H1 (cell line): ENCODE measurements at regions of chr1 and their contacts with region 1.

Region 1: GRCh38 chr1:67430352-67431155 is at the start of gene SERBP1:
- DNase-seq: peak; percentile 92 to 95
- H3K4me3 ChIP-seq: peak within 1 kb of the TSS; percentile 95 to 100 (median 98)
- H3K27ac ChIP-seq: peak within 1 kb of the TSS; percentile 94
- H3K4me1 ChIP-seq: peaks cover 0 to 12% (median 2%) of the 10 kb centered on the region in 4 experiments; a peak in 3 of 7 replicates
- H3K27me3 ChIP-seq: no peaks in the 10 kb centered on the region
- CTCF ChIP-seq: no peak
- EP300 ChIP-seq: no peak
- POLR2A ChIP-seq: peak; percentile 58 to 74
- RAD21 ChIP-seq: no peak; a peak in 1 of 4 replicates
- total RNA-seq, gene SERBP1: 536 and 539 TPM in 2 replicates

Region 2: GRCh38 chr1:67404212-67404620 is 26.3 kb before region 1 on chr1:
- CTCF ChIA-PET with region 1: interaction called, 7 read pairs
- POLR2A ChIA-PET with region 1: interaction called, 96 read pairs
- DNase-seq: no peak
- H3K4me3 ChIP-seq: no peak overlapping the region
- H3K27ac ChIP-seq: no peak overlapping the region
- H3K4me1 ChIP-seq: peaks cover 1 to 12% (median 7%) of the 10 kb centered on the region in 4 experiments; a peak in 4 of 7 replicates
- H3K27me3 ChIP-seq: no peaks in the 10 kb centered on the region
- CTCF ChIP-seq: no peak
- EP300 ChIP-seq: no peak
- POLR2A ChIP-seq: peak in 1 of 2 experiments; percentile 42; a peak in 1 of 3 replicates
- RAD21 ChIP-seq: no peak

Region 3: GRCh38 chr1:67441183-67441582 is 10.6 kb after region 1 on chr1:
- CTCF ChIA-PET with region 1: interaction called, 9 read pairs
- POLR2A ChIA-PET with region 1: interaction called, 37 read pairs
- DNase-seq: no peak
- H3K4me3 ChIP-seq: no peak overlapping the region
- H3K27ac ChIP-seq: no peak overlapping the region
- H3K4me1 ChIP-seq: no peaks in the 10 kb centered on the region
- H3K27me3 ChIP-seq: no peaks in the 10 kb centered on the region
- CTCF ChIP-seq: no peak
- EP300 ChIP-seq: no peak
- POLR2A ChIP-seq: no peak
- RAD21 ChIP-seq: no peak

Region 4: GRCh38 chr1:67460676-67461500 is 30.3 kb after region 1 on chr1:
- CTCF ChIA-PET with region 1: interaction called, 5 read pairs
- POLR2A ChIA-PET with region 1: interaction called, 72 read pairs
- DNase-seq: no peak
- H3K4me3 ChIP-seq: no peak overlapping the region
- H3K27ac ChIP-seq: no peak overlapping the region
- H3K4me1 ChIP-seq: peaks cover 4 to 30% (median 27%) of the 10 kb centered on the region in 4 experiments; a peak in 6 of 7 replicates
- H3K27me3 ChIP-seq: no peaks in the 10 kb centered on the region
- CTCF ChIP-seq: no peak
- EP300 ChIP-seq: no peak
- POLR2A ChIP-seq: no peak
- RAD21 ChIP-seq: no peak

Region 5: GRCh38 chr1:67500413-67500959 is 69.9 kb after region 1 on chr1:
- CTCF ChIA-PET with region 1: interaction called, 40 read pairs
- POLR2A ChIA-PET with region 1: interaction called, 41 read pairs
- DNase-seq: peak; percentile 75 to 94
- H3K4me3 ChIP-seq: peak overlapping the region in 3 of 4 experiments; percentile 4 to 32 (median 30); a peak in 4 of 8 replicates
- H3K27ac ChIP-seq: no peak overlapping the region
- H3K4me1 ChIP-seq: peaks cover 0 to 3% (median 1%) of the 10 kb centered on the region in 4 experiments; a peak in 2 of 7 replicates
- H3K27me3 ChIP-seq: peaks cover 0 to 8% (median 7%) of the 10 kb centered on the region in 4 experiments; a peak in 6 of 7 replicates
- CTCF ChIP-seq: peak; percentile 94 to 100 (median 98)
- EP300 ChIP-seq: no peak
- POLR2A ChIP-seq: no peak
- RAD21 ChIP-seq: peak; percentile 100